T-cell (primary cell): ENCODE measurements at regions of chr4 and their contacts with region 1.

Region 1: GRCh38 chr4:39834269-39834668 is 136.3 kb downstream of the UBE2K start:
- DNase-seq: no peak
- ATAC-seq: no peak
- H3K4me3 ChIP-seq: no peak overlapping the region
- H3K4me3 Mint-ChIP-seq: no peak overlapping the region
- H3K27ac ChIP-seq: no peak overlapping the region
- H3K27ac Mint-ChIP-seq: no peak overlapping the region
- H3K4me1 ChIP-seq: no peaks in the 10 kb centered on the region
- H3K4me1 Mint-ChIP-seq: no peaks in the 10 kb centered on the region
- H3K27me3 ChIP-seq: no peaks in the 10 kb centered on the region
- H3K27me3 Mint-ChIP-seq: no peaks in the 10 kb centered on the region

Region 2: DNA sequence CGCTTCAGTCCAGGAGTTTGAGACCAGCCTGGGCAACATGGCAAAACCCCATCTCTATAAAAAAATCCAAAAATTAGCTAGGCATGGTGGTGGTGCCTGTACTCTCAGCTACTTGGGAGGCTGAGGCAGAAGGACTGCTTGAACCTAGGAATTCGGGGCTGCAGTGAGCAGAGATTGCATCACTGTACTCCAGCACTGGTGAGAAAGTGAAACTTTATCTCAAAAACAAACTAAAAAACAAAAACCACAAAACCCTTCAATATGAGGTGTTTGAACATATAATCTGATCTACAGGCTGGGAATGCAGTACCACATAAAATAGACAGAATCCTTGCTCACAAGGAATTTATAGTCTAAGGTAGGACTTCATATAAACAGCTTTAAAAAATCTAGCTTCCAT is 39.6 kb after region 1 on chr4:
- CTCF ChIA-PET with region 1: no interaction called
- POLR2A ChIA-PET with region 1: interaction called in 1 of 2 experiments, 11 read pairs
- DNase-seq: peak in 1 of 35 experiments; percentile 8
- ATAC-seq: peak in 2 of 4 experiments; percentile 22 to 27
- H3K4me3 ChIP-seq: no peak overlapping the region
- H3K4me3 Mint-ChIP-seq: peak overlapping the region in 1 of 3 donors; percentile 39
- H3K27ac ChIP-seq: no peak overlapping the region
- H3K27ac Mint-ChIP-seq: peak overlapping the region; percentile 78 to 86
- H3K4me1 ChIP-seq: peaks cover 3 to 4% of the 10 kb centered on the region in 2 experiments
- H3K4me1 Mint-ChIP-seq: peaks cover 16 to 26% (median 24%) of the 10 kb centered on the region in 3 donors
- H3K27me3 ChIP-seq: no peaks in the 10 kb centered on the region
- H3K27me3 Mint-ChIP-seq: no peaks in the 10 kb centered on the region

Region 3: GRCh38 chr4:39933671-39934590 is 99.7 kb after region 1 on chr4:
- CTCF ChIA-PET with region 1: no interaction called
- POLR2A ChIA-PET with region 1: no interaction called
- DNase-seq: no peak
- ATAC-seq: no peak
- H3K4me3 ChIP-seq: no peak overlapping the region
- H3K4me3 Mint-ChIP-seq: peak overlapping the region in 2 of 3 donors; percentile 7 to 21
- H3K27ac ChIP-seq: peak overlapping the region; percentile 37
- H3K27ac Mint-ChIP-seq: peak overlapping the region; percentile 29 to 40
- H3K4me1 ChIP-seq: peaks cover 0 to 51% of the 10 kb centered on the region in 2 experiments
- H3K4me1 Mint-ChIP-seq: peaks cover 71 to 72% (median 72%) of the 10 kb centered on the region in 3 donors
- H3K27me3 ChIP-seq: no peaks in the 10 kb centered on the region
- H3K27me3 Mint-ChIP-seq: no peaks in the 10 kb centered on the region